RWPE1 (cell line): ENCODE measurements at regions of chr19 and their contacts with region 1.

Region 1: DNA sequence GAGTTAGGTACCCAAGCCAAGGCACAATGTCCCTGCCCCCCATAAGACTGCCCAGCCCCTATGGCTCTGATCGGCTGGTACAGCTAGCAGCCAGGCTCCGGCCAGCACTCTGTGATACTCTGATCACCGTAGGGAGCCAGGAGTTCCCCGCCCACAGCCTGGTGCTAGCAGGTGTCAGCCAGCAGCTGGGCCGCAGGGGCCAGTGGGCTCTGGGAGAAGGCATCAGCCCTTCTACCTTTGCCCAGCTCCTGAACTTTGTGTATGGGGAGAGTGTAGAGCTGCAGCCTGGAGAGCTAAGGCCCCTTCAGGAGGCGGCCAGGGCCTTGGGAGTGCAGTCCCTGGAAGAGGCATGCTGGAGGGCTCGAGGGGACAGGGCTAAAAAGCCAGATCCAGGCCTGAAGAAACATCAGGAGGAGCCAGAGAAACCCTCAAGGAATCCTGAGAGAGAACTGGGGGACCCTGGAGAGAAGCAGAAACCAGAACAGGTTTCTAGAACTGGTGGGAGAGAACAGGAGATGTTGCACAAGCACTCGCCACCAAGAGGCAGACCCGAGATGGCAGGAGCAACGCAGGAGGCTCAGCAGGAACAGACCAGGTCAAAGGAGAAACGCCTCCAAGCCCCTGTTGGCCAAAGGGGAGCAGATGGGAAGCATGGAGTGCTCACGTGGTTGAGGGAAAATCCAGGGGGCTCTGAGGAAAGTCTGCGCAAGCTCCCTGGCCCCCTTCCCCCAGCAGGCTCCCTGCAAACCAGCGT is 3.0 kb upstream of the KMT2B start:
- DNase-seq: no peak
- H3K27ac ChIP-seq: 0 out of 2 replicates have a peak overlapping the region, but pooled peaks have one; percentile 3
- CTCF ChIP-seq: no peak

Region 2: DNA sequence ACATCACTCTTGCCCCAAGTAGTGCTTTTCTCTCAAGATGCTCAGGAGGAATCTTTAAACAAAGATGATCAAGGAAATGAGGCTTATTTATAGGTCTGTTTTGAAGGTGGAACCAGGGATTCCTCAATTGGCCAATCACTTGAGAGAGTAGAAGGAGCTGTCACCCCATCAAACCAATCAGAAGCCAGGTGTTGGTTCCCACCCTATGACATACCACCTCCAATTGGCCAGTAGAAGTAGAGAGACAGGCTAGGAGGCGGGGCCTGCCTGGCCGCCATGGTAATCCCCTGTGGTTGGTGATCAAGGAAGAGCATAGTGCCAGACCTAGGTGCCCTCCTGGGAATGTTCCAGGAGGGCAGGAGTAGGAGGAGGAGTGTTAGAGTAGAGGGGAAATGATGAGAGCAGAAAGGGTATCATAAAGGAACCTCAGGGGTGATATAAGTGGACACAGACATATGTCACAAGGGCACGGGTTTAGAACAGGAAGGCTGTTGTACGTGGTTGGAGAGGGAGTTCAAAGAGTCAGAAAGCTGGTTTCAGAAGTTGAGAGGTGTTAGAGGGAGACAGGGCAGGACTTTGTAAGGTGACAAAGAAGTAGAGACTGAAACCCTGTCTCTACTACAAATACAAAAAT is 118.3 kb before region 1 on chr19:
- CTCF ChIA-PET with region 1: interaction called, 10 read pairs
- POLR2A ChIA-PET with region 1: no interaction called
- DNase-seq: peak; percentile 39
- H3K27ac ChIP-seq: no peak overlapping the region
- CTCF ChIP-seq: no peak

Region 3: GRCh38 chr19:35767288-35768081 is 52.7 kb after region 1 on chr19:
- CTCF ChIA-PET with region 1: no interaction called
- POLR2A ChIA-PET with region 1: no interaction called
- DNase-seq: no peak
- H3K27ac ChIP-seq: no peak overlapping the region
- CTCF ChIP-seq: no peak